B cell (primary cell): ENCODE measurements at regions of chr13 and their contacts with region 1.

Region 1: GRCh38 chr13:73708393-73708985 is 425.7 kb downstream of the KLF12 start:
- DNase-seq: peak; percentile 45
- ATAC-seq: no peak
- H3K4me3 ChIP-seq: no peak overlapping the region
- H3K4me3 Mint-ChIP-seq: no peak overlapping the region
- H3K27ac ChIP-seq: no peak overlapping the region
- H3K27ac Mint-ChIP-seq: no peak overlapping the region
- H3K4me1 ChIP-seq: no peaks in the 10 kb centered on the region
- H3K4me1 Mint-ChIP-seq: peaks cover 9% of the 10 kb centered on the region
- H3K27me3 ChIP-seq: no peaks in the 10 kb centered on the region
- H3K27me3 Mint-ChIP-seq: no peaks in the 10 kb centered on the region
- CTCF ChIP-seq: peak; percentile 65

Region 2: DNA sequence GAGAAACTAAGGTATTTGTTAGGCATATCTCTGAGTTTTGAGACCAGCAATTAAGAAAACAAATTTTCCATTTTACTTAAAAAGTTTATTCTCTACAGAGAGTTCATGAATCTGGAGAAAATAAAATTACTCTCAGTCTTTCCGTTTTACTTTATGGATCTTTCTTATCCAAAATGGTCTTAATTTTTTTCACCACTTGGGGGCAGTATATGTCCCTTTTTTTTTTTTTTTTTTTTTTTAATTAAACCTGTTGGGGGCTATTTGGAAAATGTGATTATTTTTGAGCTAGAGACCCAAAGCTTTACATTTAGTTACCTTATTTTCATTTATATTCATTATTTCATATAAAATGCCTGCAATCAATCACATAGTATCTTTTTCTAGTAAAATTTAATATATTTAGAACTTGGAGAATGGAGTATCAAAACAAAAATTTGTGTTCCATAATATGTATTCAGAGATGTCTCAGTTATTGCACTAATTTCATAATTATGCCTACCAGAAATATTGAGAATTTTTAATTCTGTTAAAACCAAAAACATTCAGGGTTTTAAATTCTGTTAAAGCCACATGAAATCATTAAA is 899.5 kb before region 1 on chr13:
- CTCF ChIA-PET with region 1: no interaction called
- POLR2A ChIA-PET with region 1: no interaction called
- intact Hi-C with region 1: loop called (anchors 2 kb)
- DNase-seq: peak; percentile 37
- ATAC-seq: no peak
- H3K4me3 ChIP-seq: no peak overlapping the region
- H3K4me3 Mint-ChIP-seq: no peak overlapping the region
- H3K27ac ChIP-seq: no peak overlapping the region
- H3K27ac Mint-ChIP-seq: no peak overlapping the region
- H3K4me1 ChIP-seq: no peaks in the 10 kb centered on the region
- H3K4me1 Mint-ChIP-seq: no peaks in the 10 kb centered on the region
- H3K27me3 ChIP-seq: no peaks in the 10 kb centered on the region
- H3K27me3 Mint-ChIP-seq: no peaks in the 10 kb centered on the region
- CTCF ChIP-seq: peak; percentile 90

Region 3: DNA sequence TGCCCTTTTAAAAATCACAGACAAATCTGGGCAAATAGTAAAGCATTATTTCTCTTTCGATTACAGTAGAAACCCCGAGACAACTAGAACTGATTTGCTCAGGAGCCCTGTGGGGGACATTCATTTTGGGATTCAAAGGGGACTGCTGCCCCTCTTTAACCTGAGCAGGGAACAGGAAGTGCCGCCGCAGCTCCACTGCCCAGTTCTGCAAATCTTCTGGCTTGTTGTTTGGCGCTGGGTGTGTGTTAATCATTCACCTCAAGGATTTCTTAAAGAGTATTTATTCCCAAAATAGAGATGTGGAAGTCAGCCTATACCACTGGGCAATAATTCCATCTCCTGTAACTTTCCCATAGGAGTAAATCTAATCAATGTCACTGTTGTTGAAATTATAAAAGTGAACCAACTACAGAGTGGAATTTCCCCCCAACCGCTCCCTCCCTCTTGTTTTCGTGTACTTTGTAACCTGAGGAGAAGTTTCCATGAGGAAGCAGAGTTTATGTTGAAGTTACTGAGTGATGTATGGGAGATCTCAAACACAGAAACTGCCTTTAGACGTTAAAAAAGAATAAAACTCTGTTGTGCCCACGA is 90.1 kb before region 1 on chr13:
- CTCF ChIA-PET with region 1: no interaction called
- POLR2A ChIA-PET with region 1: no interaction called
- intact Hi-C with region 1: no loop called
- DNase-seq: no peak
- ATAC-seq: no peak
- H3K4me3 ChIP-seq: no peak overlapping the region
- H3K4me3 Mint-ChIP-seq: no peak overlapping the region
- H3K27ac ChIP-seq: no peak overlapping the region
- H3K27ac Mint-ChIP-seq: no peak overlapping the region
- H3K4me1 ChIP-seq: no peaks in the 10 kb centered on the region
- H3K4me1 Mint-ChIP-seq: no peaks in the 10 kb centered on the region
- H3K27me3 ChIP-seq: no peaks in the 10 kb centered on the region
- H3K27me3 Mint-ChIP-seq: peaks cover 15% of the 10 kb centered on the region
- CTCF ChIP-seq: no peak

Region 4: GRCh38 chr13:73765651-73766384 is 57.3 kb after region 1 on chr13:
- CTCF ChIA-PET with region 1: no interaction called
- POLR2A ChIA-PET with region 1: no interaction called
- intact Hi-C with region 1: no loop called
- DNase-seq: peak; percentile 65
- ATAC-seq: peak; percentile 79
- H3K4me3 ChIP-seq: peak overlapping the region in 4 of 5 experiments; percentile 0 to 43 (median 16)
- H3K4me3 Mint-ChIP-seq: peak overlapping the region; percentile 78
- H3K27ac ChIP-seq: peak overlapping the region; percentile 83 to 92
- H3K27ac Mint-ChIP-seq: peak overlapping the region; percentile 94
- H3K4me1 ChIP-seq: peaks cover 51 to 60% of the 10 kb centered on the region in 2 donors
- H3K4me1 Mint-ChIP-seq: peaks cover 71% of the 10 kb centered on the region
- H3K27me3 ChIP-seq: no peaks in the 10 kb centered on the region
- H3K27me3 Mint-ChIP-seq: no peaks in the 10 kb centered on the region
- CTCF ChIP-seq: no peak